ENCODE measurements at regions of chr15 and their contacts with region 1.

Region 1: DNA sequence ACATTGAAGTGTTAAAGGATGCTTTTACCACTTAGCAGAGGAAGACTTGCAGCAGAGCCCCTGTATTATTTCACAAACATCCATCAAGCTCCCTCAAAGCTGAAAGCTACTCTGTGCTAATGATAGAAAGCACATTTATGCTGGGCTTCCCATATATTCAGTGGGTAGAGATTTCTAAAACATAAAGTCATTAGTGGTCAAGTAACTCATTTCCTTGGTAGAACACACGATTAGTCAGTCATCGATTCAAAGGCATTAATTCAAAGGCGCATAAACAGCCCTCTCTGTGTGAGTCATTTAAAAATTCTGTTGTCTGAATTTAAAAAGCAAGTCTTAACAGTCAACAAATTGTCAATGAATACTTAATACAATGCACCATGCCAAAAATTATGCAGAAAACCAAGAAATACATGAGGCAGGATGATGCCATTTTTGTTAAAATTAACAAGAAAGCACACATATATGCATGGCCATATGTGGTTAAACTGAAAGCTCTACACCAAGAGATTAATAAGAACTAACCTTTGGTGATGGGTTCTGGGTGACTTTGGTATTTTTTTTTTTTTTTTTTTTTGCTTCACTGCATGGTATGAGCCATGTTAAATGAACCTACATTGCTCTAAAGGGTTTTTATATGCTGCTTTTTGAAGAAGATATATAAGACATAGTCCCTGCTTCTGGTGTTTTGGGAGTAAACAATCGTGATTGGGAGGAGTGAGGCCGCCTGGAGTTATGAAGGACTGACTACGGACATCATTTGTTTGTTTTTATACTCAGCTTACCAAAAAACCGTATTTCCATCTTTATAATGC is 61.7 kb downstream of the LDHAL6B start:
- DNase-seq: no peak
- ATAC-seq: peak; percentile 86
- H3K4me3 ChIP-seq: no peak overlapping the region
- H3K27ac ChIP-seq: no peak overlapping the region
- H3K4me1 ChIP-seq: no peaks in the 10 kb centered on the region
- H3K27me3 ChIP-seq: no peaks in the 10 kb centered on the region
- CTCF ChIP-seq: no peak
- EP300 ChIP-seq: no peak
- POLR2A ChIP-seq: no peak
- RAD21 ChIP-seq: no peak

Region 2: GRCh38 chr15:59170295-59171066 is 97.9 kb before region 1 on chr15:
- CTCF ChIA-PET with region 1: no interaction called
- POLR2A ChIA-PET with region 1: no interaction called
- RAD21 ChIA-PET with region 1: no interaction called
- SMC1A ChIA-PET with region 1: no interaction called
- in situ Hi-C with region 1: no loop called
- intact Hi-C with region 1: no loop called
- DNase-seq: no peak
- ATAC-seq: no peak
- H3K4me3 ChIP-seq: no peak overlapping the region
- H3K27ac ChIP-seq: no peak overlapping the region
- H3K4me1 ChIP-seq: peaks cover 3% of the 10 kb centered on the region; the same call in 1 of the 2 replicates
- H3K27me3 ChIP-seq: no peaks in the 10 kb centered on the region
- CTCF ChIP-seq: no peak
- EP300 ChIP-seq: no peak
- POLR2A ChIP-seq: no peak; the same call in 1 of the 2 replicates
- RAD21 ChIP-seq: no peak

Region 3: GRCh38 chr15:59339252-59339672 is 70.9 kb after region 1 on chr15:
- CTCF ChIA-PET with region 1: no interaction called
- POLR2A ChIA-PET with region 1: interaction called, 12 read pairs
- RAD21 ChIA-PET with region 1: no interaction called
- SMC1A ChIA-PET with region 1: no interaction called
- in situ Hi-C with region 1: no loop called
- intact Hi-C with region 1: no loop called
- DNase-seq: no peak
- ATAC-seq: no peak
- H3K4me3 ChIP-seq: no peak overlapping the region
- H3K27ac ChIP-seq: no peak overlapping the region
- H3K4me1 ChIP-seq: peaks cover 23% of the 10 kb centered on the region
- H3K27me3 ChIP-seq: no peaks in the 10 kb centered on the region
- CTCF ChIP-seq: no peak
- EP300 ChIP-seq: no peak
- POLR2A ChIP-seq: no peak
- RAD21 ChIP-seq: no peak

Measured in GM12878 (cell line).